Activated CD4-positive, alpha-beta T cell treated with anti-CD3 and anti-CD28 coated beads for 36 hours (primary cell): ENCODE measurements at regions of chr9 and their contacts with region 1.

Region 1: GRCh38 chr9:137034863-137035761 is 3.2 kb upstream of the FUT7 start:
- DNase-seq: peak; percentile 96
- ATAC-seq: peak; percentile 80
- H3K4me3 Mint-ChIP-seq: peak overlapping the region; percentile 66
- H3K27ac Mint-ChIP-seq: peak overlapping the region; percentile 83
- H3K4me1 Mint-ChIP-seq: peaks cover 36% of the 10 kb centered on the region
- H3K27me3 Mint-ChIP-seq: no peaks in the 10 kb centered on the region

Region 2: DNA sequence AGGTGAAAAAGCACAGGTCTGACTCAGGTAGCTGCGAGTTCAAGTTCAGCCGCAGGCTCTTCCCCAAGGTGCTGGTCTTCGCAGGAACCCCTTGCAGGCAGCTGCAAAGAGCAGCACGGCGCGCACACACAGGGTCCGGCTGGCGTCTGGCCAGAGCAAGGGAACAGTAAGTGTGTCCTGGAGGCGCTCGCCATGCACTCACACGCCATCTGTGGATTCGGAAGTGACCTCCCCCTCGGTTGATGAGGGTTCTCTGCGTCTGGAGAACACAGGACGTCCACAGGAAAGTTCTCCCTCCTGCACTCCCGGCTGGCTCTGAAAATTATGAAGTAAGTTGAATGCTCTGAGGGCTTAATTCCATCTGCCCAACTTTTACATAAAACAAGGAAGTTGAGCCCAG is 386.4 kb before region 1 on chr9:
- CTCF ChIA-PET with region 1: no interaction called
- POLR2A ChIA-PET with region 1: no interaction called
- intact Hi-C with region 1: no loop called
- DNase-seq: peak; percentile 4
- ATAC-seq: no peak
- H3K4me3 Mint-ChIP-seq: no peak overlapping the region
- H3K27ac Mint-ChIP-seq: no peak overlapping the region
- H3K4me1 Mint-ChIP-seq: no peaks in the 10 kb centered on the region
- H3K27me3 Mint-ChIP-seq: peaks cover 14% of the 10 kb centered on the region

Region 3: DNA sequence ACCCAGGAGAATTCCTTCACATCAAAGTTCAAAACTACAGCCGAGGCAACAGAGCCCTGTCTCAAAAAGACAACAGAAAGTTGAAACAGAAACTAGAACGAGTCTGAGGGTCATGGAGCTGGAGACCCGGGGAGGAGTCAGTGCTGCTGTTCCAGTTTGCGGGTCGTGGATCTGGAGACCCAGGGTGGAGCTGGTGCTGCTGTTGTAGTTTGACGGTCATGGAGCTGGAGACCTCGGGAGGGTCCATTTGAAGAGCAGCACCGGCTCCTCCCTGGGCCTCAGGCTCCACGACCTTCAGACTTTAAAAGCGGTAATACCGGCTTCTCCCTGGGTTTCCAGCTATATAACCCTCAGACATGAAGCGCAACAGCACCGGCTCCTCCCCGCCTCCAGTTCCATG is 257.8 kb before region 1 on chr9:
- CTCF ChIA-PET with region 1: interaction called, 12 read pairs
- POLR2A ChIA-PET with region 1: no interaction called
- intact Hi-C with region 1: no loop called
- DNase-seq: no peak
- ATAC-seq: no peak
- H3K4me3 Mint-ChIP-seq: no peak overlapping the region
- H3K27ac Mint-ChIP-seq: peak overlapping the region; percentile 4
- H3K4me1 Mint-ChIP-seq: no peaks in the 10 kb centered on the region
- H3K27me3 Mint-ChIP-seq: peaks cover 10% of the 10 kb centered on the region

Region 4: GRCh38 chr9:137002251-137003041 is 32.7 kb before region 1 on chr9:
- CTCF ChIA-PET with region 1: interaction called, 12 read pairs
- POLR2A ChIA-PET with region 1: interaction called, 4 read pairs
- intact Hi-C with region 1: no loop called
- DNase-seq: no peak
- ATAC-seq: no peak
- H3K4me3 Mint-ChIP-seq: no peak overlapping the region
- H3K27ac Mint-ChIP-seq: no peak overlapping the region
- H3K4me1 Mint-ChIP-seq: peaks cover 16% of the 10 kb centered on the region
- H3K27me3 Mint-ChIP-seq: peaks cover 5% of the 10 kb centered on the region

Region 5: GRCh38 chr9:137046098-137046787 is 11.1 kb after region 1 on chr9 and contains the start of gene NPDC1:
- CTCF ChIA-PET with region 1: interaction called, 20 read pairs
- POLR2A ChIA-PET with region 1: interaction called, 3 read pairs
- intact Hi-C with region 1: no loop called
- DNase-seq: peak; percentile 92
- ATAC-seq: peak; percentile 65
- H3K4me3 Mint-ChIP-seq: peak within 1 kb of the TSS; percentile 61
- H3K27ac Mint-ChIP-seq: no peak within 1 kb of the TSS
- H3K4me1 Mint-ChIP-seq: peaks cover 12% of the 10 kb centered on the region
- H3K27me3 Mint-ChIP-seq: peaks cover 34% of the 10 kb centered on the region
- total RNA-seq, gene NPDC1: 21.0 to 23.1 TPM

Region 6: GRCh38 chr9:137129456-137130175 is 94.5 kb after region 1 on chr9:
- CTCF ChIA-PET with region 1: interaction called, 14 read pairs
- POLR2A ChIA-PET with region 1: no interaction called
- intact Hi-C with region 1: no loop called
- DNase-seq: peak; percentile 95
- ATAC-seq: peak; percentile 96
- H3K4me3 Mint-ChIP-seq: peak overlapping the region; percentile 89
- H3K27ac Mint-ChIP-seq: peak overlapping the region; percentile 70
- H3K4me1 Mint-ChIP-seq: peaks cover 21% of the 10 kb centered on the region
- H3K27me3 Mint-ChIP-seq: peaks cover 5% of the 10 kb centered on the region

Region 7: GRCh38 chr9:137140151-137141012 is 105.3 kb after region 1 on chr9:
- CTCF ChIA-PET with region 1: no interaction called
- POLR2A ChIA-PET with region 1: no interaction called
- intact Hi-C with region 1: no loop called
- DNase-seq: no peak
- ATAC-seq: no peak
- H3K4me3 Mint-ChIP-seq: no peak overlapping the region
- H3K27ac Mint-ChIP-seq: no peak overlapping the region
- H3K4me1 Mint-ChIP-seq: no peaks in the 10 kb centered on the region
- H3K27me3 Mint-ChIP-seq: peaks cover 41% of the 10 kb centered on the region

Region 8: GRCh38 chr9:137176302-137177182 is 141.4 kb after region 1 on chr9:
- CTCF ChIA-PET with region 1: no interaction called
- POLR2A ChIA-PET with region 1: no interaction called
- intact Hi-C with region 1: no loop called
- DNase-seq: peak; percentile 54
- ATAC-seq: peak; percentile 59
- H3K4me3 Mint-ChIP-seq: no peak overlapping the region
- H3K27ac Mint-ChIP-seq: no peak overlapping the region
- H3K4me1 Mint-ChIP-seq: no peaks in the 10 kb centered on the region
- H3K27me3 Mint-ChIP-seq: peaks cover 2% of the 10 kb centered on the region